Transverse colon (tissue), 4 donors: ENCODE measurements at regions of chr15 and their contacts with region 1.

Region 1: GRCh38 chr15:45790325-45790943 is 155.6 kb downstream of the SQOR start:
- DNase-seq: peak; percentile 34
- H3K4me3 ChIP-seq: no peak overlapping the region
- H3K27ac ChIP-seq: no peak overlapping the region
- H3K4me1 ChIP-seq: peaks cover 0 to 5% (median 0%) of the 10 kb centered on the region in 4 donors
- H3K27me3 ChIP-seq: no peaks in the 10 kb centered on the region
- CTCF ChIP-seq: peak; percentile 51 to 58 (median 51)
- EP300 ChIP-seq: no peak
- POLR2A ChIP-seq: no peak

Region 2: DNA sequence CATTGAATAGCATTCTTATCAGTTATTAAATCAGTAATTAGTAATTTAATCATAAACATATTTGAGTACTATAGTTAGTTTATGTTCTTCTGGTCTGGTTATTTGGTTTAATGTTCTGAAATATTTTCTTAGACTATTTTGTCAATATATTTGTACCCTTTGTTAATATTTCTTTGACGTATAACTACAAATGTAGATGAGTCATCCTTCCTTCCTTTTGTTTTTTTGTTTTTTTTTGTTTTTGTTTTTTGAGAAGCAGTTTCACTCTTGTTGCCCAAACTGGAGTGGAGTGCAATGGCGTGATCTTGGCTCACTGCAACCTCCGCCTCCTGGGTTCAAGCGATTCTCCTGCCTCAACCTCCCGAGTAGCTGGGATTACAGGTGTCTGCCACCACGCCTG is 1270.9 kb before region 1 on chr15:
- in situ Hi-C with region 1: no loop called
- intact Hi-C with region 1: no loop called
- DNase-seq: no peak
- H3K4me3 ChIP-seq: no peak overlapping the region
- H3K27ac ChIP-seq: no peak overlapping the region
- H3K4me1 ChIP-seq: no peaks in the 10 kb centered on the region
- H3K27me3 ChIP-seq: no peaks in the 10 kb centered on the region
- CTCF ChIP-seq: no peak
- EP300 ChIP-seq: no peak
- POLR2A ChIP-seq: no peak

Region 3: GRCh38 chr15:45747426-45747825 is 43.0 kb before region 1 on chr15:
- in situ Hi-C with region 1: no loop called
- intact Hi-C with region 1: loop called (anchors 2 kb)
- DNase-seq: no peak
- H3K4me3 ChIP-seq: no peak overlapping the region
- H3K27ac ChIP-seq: no peak overlapping the region
- H3K4me1 ChIP-seq: no peaks in the 10 kb centered on the region
- H3K27me3 ChIP-seq: no peaks in the 10 kb centered on the region
- CTCF ChIP-seq: no peak
- EP300 ChIP-seq: no peak
- POLR2A ChIP-seq: no peak